ENCODE measurements at regions of chr1 and their contacts with region 1.

Region 1: GRCh38 chr1:89843281-89844121 is 22.7 kb downstream of the LRRC8D start:
- DNase-seq: peak; percentile 49 to 53
- ATAC-seq: peak; percentile 84 to 89
- H3K4me3 ChIP-seq: peak overlapping the region; percentile 61 to 77 (median 73)
- H3K27ac ChIP-seq: peak overlapping the region; percentile 66 to 84 (median 78)
- H3K4me1 ChIP-seq: peaks cover 8 to 19% of the 10 kb centered on the region in 2 donors
- H3K27me3 ChIP-seq: no peaks in the 10 kb centered on the region
- CTCF ChIP-seq: peak; percentile 64 to 88 (median 81)
- POLR2A ChIP-seq: no peak

Region 2: GRCh38 chr1:89804642-89805237 is 38.8 kb before region 1 on chr1:
- in situ Hi-C with region 1: loop called in 1 of 4 experiments (anchors 5 kb)
- intact Hi-C with region 1: loop called (anchors 1 kb)
- DNase-seq: peak; percentile 67 to 78
- ATAC-seq: peak; percentile 96 to 98
- H3K4me3 ChIP-seq: no peak overlapping the region
- H3K27ac ChIP-seq: no peak overlapping the region
- H3K4me1 ChIP-seq: no peaks in the 10 kb centered on the region
- H3K27me3 ChIP-seq: no peaks in the 10 kb centered on the region
- CTCF ChIP-seq: peak; percentile 75 to 93 (median 82)
- POLR2A ChIP-seq: no peak

Region 3: GRCh38 chr1:89929467-89930063 is 86.1 kb after region 1 on chr1:
- in situ Hi-C with region 1: no loop called
- intact Hi-C with region 1: loop called (anchors 5 kb)
- DNase-seq: no peak
- ATAC-seq: peak in 1 of 2 donors; percentile 64
- H3K4me3 ChIP-seq: no peak overlapping the region
- H3K27ac ChIP-seq: no peak overlapping the region
- H3K4me1 ChIP-seq: peaks cover 7 to 17% of the 10 kb centered on the region in 2 donors
- H3K27me3 ChIP-seq: no peaks in the 10 kb centered on the region
- CTCF ChIP-seq: no peak
- POLR2A ChIP-seq: no peak

Region 4: GRCh38 chr1:89953072-89953626 is 109.6 kb after region 1 on chr1:
- in situ Hi-C with region 1: no loop called
- intact Hi-C with region 1: loop called (anchors 2 kb)
- DNase-seq: no peak
- ATAC-seq: peak; percentile 54 to 66
- H3K4me3 ChIP-seq: no peak overlapping the region
- H3K27ac ChIP-seq: no peak overlapping the region
- H3K4me1 ChIP-seq: no peaks in the 10 kb centered on the region
- H3K27me3 ChIP-seq: no peaks in the 10 kb centered on the region
- CTCF ChIP-seq: peak in 4 of 5 experiments; percentile 11 to 51 (median 38)
- POLR2A ChIP-seq: no peak

Region 5: GRCh38 chr1:89987170-89987819 is 143.8 kb after region 1 on chr1:
- in situ Hi-C with region 1: no loop called
- intact Hi-C with region 1: loop called (anchors 1 kb)
- DNase-seq: peak in 1 of 2 donors; percentile 22
- ATAC-seq: peak; percentile 93 to 95
- H3K4me3 ChIP-seq: no peak overlapping the region
- H3K27ac ChIP-seq: no peak overlapping the region
- H3K4me1 ChIP-seq: peaks cover 0 to 3% of the 10 kb centered on the region in 2 donors
- H3K27me3 ChIP-seq: no peaks in the 10 kb centered on the region
- CTCF ChIP-seq: peak; percentile 73 to 88 (median 79)
- POLR2A ChIP-seq: no peak

Measured in gastrocnemius medialis (tissue), 4 donors.